Activated CD4-positive, alpha-beta T cell treated with anti-CD3 and anti-CD28 coated beads for 36 hours (primary cell): ENCODE measurements at regions of chr6 and their contacts with region 1.

Region 1: GRCh38 chr6:26122793-26123674 is 35.8 kb downstream of the HFE start:
- DNase-seq: peak; percentile 95
- ATAC-seq: peak; percentile 57
- H3K4me3 Mint-ChIP-seq: peak overlapping the region; percentile 82
- H3K27ac Mint-ChIP-seq: peak overlapping the region; percentile 100
- H3K4me1 Mint-ChIP-seq: peaks cover 34% of the 10 kb centered on the region
- H3K27me3 Mint-ChIP-seq: peaks cover 3% of the 10 kb centered on the region

Region 2: GRCh38 chr6:25193460-25194171 is 929.4 kb before region 1 on chr6:
- CTCF ChIA-PET with region 1: no interaction called
- POLR2A ChIA-PET with region 1: no interaction called
- intact Hi-C with region 1: no loop called
- DNase-seq: no peak
- ATAC-seq: no peak
- H3K4me3 Mint-ChIP-seq: no peak overlapping the region
- H3K27ac Mint-ChIP-seq: no peak overlapping the region
- H3K4me1 Mint-ChIP-seq: no peaks in the 10 kb centered on the region
- H3K27me3 Mint-ChIP-seq: peaks cover 11% of the 10 kb centered on the region

Region 3: GRCh38 chr6:26045065-26045927 is 77.7 kb before region 1 on chr6:
- CTCF ChIA-PET with region 1: interaction called, 8 read pairs
- POLR2A ChIA-PET with region 1: interaction called, 109 read pairs
- intact Hi-C with region 1: loop called in 1 of 2 experiments (anchors 1 kb)
- DNase-seq: peak; percentile 83
- ATAC-seq: peak; percentile 63
- H3K4me3 Mint-ChIP-seq: peak overlapping the region; percentile 79
- H3K27ac Mint-ChIP-seq: peak overlapping the region; percentile 99
- H3K4me1 Mint-ChIP-seq: peaks cover 18% of the 10 kb centered on the region
- H3K27me3 Mint-ChIP-seq: no peaks in the 10 kb centered on the region

Region 4: GRCh38 chr6:26103770-26104456 is 19.1 kb before region 1 on chr6:
- CTCF ChIA-PET with region 1: interaction called, 7 read pairs
- POLR2A ChIA-PET with region 1: interaction called, 93 read pairs
- intact Hi-C with region 1: loop called (anchors 1 kb)
- DNase-seq: peak; percentile 92
- ATAC-seq: peak; percentile 89
- H3K4me3 Mint-ChIP-seq: peak overlapping the region; percentile 82
- H3K27ac Mint-ChIP-seq: peak overlapping the region; percentile 97
- H3K4me1 Mint-ChIP-seq: peaks cover 16% of the 10 kb centered on the region
- H3K27me3 Mint-ChIP-seq: no peaks in the 10 kb centered on the region

Region 5: GRCh38 chr6:26183581-26184366 is 60.7 kb after region 1 on chr6:
- CTCF ChIA-PET with region 1: interaction called, 4 read pairs
- POLR2A ChIA-PET with region 1: interaction called, 43 read pairs
- intact Hi-C with region 1: loop called (anchors 2 kb)
- DNase-seq: peak; percentile 82
- ATAC-seq: peak; percentile 80
- H3K4me3 Mint-ChIP-seq: peak overlapping the region; percentile 89
- H3K27ac Mint-ChIP-seq: peak overlapping the region; percentile 92
- H3K4me1 Mint-ChIP-seq: peaks cover 45% of the 10 kb centered on the region
- H3K27me3 Mint-ChIP-seq: no peaks in the 10 kb centered on the region

Region 6: GRCh38 chr6:26270903-26271667 is 148.1 kb after region 1 on chr6:
- CTCF ChIA-PET with region 1: no interaction called
- POLR2A ChIA-PET with region 1: interaction called, 27 read pairs
- intact Hi-C with region 1: loop called in 1 of 2 experiments (anchors 5 kb)
- DNase-seq: peak; percentile 85
- ATAC-seq: peak; percentile 43
- H3K4me3 Mint-ChIP-seq: no peak overlapping the region
- H3K27ac Mint-ChIP-seq: no peak overlapping the region
- H3K4me1 Mint-ChIP-seq: peaks cover 23% of the 10 kb centered on the region
- H3K27me3 Mint-ChIP-seq: no peaks in the 10 kb centered on the region

Region 7: DNA sequence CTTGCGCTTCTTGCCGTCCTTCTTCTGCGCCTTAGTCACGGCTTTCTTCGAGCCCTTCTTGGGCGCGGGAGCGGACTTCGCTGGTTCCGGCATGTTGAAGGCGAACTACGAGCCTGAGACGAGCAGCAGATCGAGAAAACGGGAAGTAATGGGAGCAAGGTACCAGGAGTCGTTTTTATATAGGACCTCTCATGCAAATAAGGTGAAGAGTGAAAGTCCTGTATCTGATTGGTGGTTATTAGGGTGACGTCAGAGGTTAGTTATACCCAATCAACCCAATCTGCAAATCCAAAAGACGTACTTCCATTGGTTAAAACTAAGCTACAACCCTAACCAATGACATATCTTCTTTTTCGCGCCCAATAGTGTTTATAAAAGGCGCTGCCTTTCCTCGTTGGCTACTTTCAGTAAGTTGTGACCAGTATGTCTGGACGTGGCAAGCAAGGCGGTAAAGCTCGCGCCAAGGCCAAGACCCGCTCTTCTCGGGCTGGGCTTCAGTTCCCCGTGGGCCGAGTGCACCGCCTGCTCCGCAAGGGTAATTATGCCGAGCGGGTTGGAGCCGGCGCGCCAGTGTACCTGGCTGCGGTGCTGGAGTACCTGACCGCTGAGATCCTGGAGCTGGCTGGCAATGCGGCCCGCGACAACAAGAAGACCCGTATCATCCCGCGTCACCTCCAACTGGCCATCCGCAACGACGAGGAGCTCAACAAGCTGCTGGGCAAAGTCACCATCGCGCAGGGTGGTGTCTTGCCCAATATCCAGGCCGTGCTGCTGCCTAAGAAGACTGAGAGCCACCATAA is 1023.9 kb after region 1 on chr6:
- CTCF ChIA-PET with region 1: no interaction called
- POLR2A ChIA-PET with region 1: interaction called, 14 read pairs
- intact Hi-C with region 1: loop called in 1 of 2 experiments (anchors 1 kb)
- DNase-seq: peak; percentile 89
- ATAC-seq: peak; percentile 69
- H3K4me3 Mint-ChIP-seq: no peak overlapping the region
- H3K27ac Mint-ChIP-seq: no peak overlapping the region
- H3K4me1 Mint-ChIP-seq: peaks cover 11% of the 10 kb centered on the region
- H3K27me3 Mint-ChIP-seq: no peaks in the 10 kb centered on the region